ENCODE measurements at regions of chr19 and their contacts with region 1.

Region 1: GRCh38 chr19:45809643-45810159 is 5.4 kb downstream of the RSPH6A start:
- DNase-seq: no peak
- ATAC-seq: no peak
- H3K4me3 ChIP-seq: no peak overlapping the region
- H3K27ac ChIP-seq: no peak overlapping the region
- H3K4me1 ChIP-seq: no peaks in the 10 kb centered on the region
- H3K27me3 ChIP-seq: no peaks in the 10 kb centered on the region

Region 2: GRCh38 chr19:45547976-45548609 is 261.6 kb before region 1 on chr19:
- intact Hi-C with region 1: no loop called
- DNase-seq: no peak
- ATAC-seq: no peak
- H3K4me3 ChIP-seq: no peak overlapping the region
- H3K27ac ChIP-seq: no peak overlapping the region
- H3K4me1 ChIP-seq: no peaks in the 10 kb centered on the region
- H3K27me3 ChIP-seq: no peaks in the 10 kb centered on the region

Region 3: GRCh38 chr19:45852145-45852750 is 42.5 kb after region 1 on chr19:
- intact Hi-C with region 1: loop called in 1 of 2 experiments (anchors 5 kb)
- DNase-seq: no peak
- ATAC-seq: no peak
- H3K4me3 ChIP-seq: no peak overlapping the region
- H3K27ac ChIP-seq: no peak overlapping the region
- H3K4me1 ChIP-seq: no peaks in the 10 kb centered on the region
- H3K27me3 ChIP-seq: no peaks in the 10 kb centered on the region

Region 4: DNA sequence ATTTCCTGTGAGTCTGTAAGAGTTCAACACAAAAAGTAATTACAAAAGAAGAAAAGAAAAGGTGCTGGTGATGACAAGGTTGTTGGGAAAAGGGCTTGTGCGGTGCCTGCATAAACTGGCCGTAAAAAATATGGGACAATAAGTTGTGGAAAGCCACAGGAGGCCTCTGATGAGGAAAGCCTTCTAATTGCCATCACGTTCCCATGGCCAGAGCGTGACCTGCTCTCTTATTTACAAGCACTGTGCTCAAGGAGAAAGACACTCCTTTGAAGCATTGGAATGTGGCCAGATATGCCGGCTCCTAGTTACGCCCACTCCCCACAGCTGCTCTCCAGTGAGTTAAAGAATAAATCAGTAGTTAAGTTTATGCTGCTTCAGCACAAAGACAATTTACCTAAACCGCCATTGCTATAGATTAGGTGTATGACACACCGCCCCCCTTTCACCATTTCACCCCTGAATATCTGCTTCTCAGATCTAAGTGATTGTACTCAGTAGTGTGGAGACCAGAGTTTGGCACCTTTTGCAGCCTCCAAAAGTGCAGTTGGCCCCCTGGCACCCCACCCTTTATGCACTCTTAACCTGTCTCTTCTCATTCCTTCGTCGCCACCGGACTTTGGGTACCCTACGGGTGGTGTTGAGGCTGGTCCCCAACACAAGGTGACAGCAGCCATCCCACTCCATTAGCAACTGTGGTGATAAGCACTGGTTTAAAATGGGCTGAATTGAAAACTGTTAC is 221.3 kb after region 1 on chr19:
- intact Hi-C with region 1: no loop called
- DNase-seq: no peak
- ATAC-seq: no peak
- H3K4me3 ChIP-seq: no peak overlapping the region
- H3K27ac ChIP-seq: no peak overlapping the region
- H3K4me1 ChIP-seq: no peaks in the 10 kb centered on the region
- H3K27me3 ChIP-seq: no peaks in the 10 kb centered on the region